ENCODE measurements at regions of chr17 and their contacts with region 1.

Region 1: GRCh38 chr17:80927791-80928216 is 63.8 kb upstream of the CHMP6 start:
- DNase-seq: no peak
- ATAC-seq: no peak
- H3K4me3 ChIP-seq: no peak overlapping the region
- H3K27ac ChIP-seq: no peak overlapping the region
- H3K4me1 ChIP-seq: peaks cover 7% of the 10 kb centered on the region
- H3K27me3 ChIP-seq: no peaks in the 10 kb centered on the region
- CTCF ChIP-seq: no peak
- EP300 ChIP-seq: no peak
- POLR2A ChIP-seq: no peak
- RAD21 ChIP-seq: no peak

Region 2: GRCh38 chr17:80899402-80900268 is 28.2 kb before region 1 on chr17:
- CTCF ChIA-PET with region 1: interaction called, 3 read pairs
- POLR2A ChIA-PET with region 1: interaction called, 3 read pairs
- RAD21 ChIA-PET with region 1: interaction called, 18 read pairs
- SMC1A ChIA-PET with region 1: interaction called, 12 read pairs
- in situ Hi-C with region 1: no loop called
- intact Hi-C with region 1: no loop called
- DNase-seq: no peak
- ATAC-seq: peak; percentile 45
- H3K4me3 ChIP-seq: no peak overlapping the region
- H3K27ac ChIP-seq: no peak overlapping the region
- H3K4me1 ChIP-seq: peaks cover 25% of the 10 kb centered on the region
- H3K27me3 ChIP-seq: no peaks in the 10 kb centered on the region
- CTCF ChIP-seq: peak; percentile 40 to 68 (median 48)
- EP300 ChIP-seq: no peak
- POLR2A ChIP-seq: no peak
- RAD21 ChIP-seq: peak; percentile 68

Region 3: GRCh38 chr17:81165246-81166032 is 237.6 kb after region 1 on chr17 and contains the start of gene PVALEF:
- CTCF ChIA-PET with region 1: no interaction called
- POLR2A ChIA-PET with region 1: no interaction called
- RAD21 ChIA-PET with region 1: no interaction called
- SMC1A ChIA-PET with region 1: no interaction called
- in situ Hi-C with region 1: no loop called
- intact Hi-C with region 1: no loop called
- DNase-seq: no peak
- ATAC-seq: no peak
- H3K4me3 ChIP-seq: no peak within 1 kb of the TSS
- H3K27ac ChIP-seq: no peak within 1 kb of the TSS
- H3K4me1 ChIP-seq: no peaks in the 10 kb centered on the region
- H3K27me3 ChIP-seq: no peaks in the 10 kb centered on the region; a peak in 4 of 4 replicates
- CTCF ChIP-seq: no peak
- EP300 ChIP-seq: no peak
- POLR2A ChIP-seq: no peak
- RAD21 ChIP-seq: no peak
- polyA plus RNA-seq, gene PVALEF: not detected